Left colon (tissue), 2 donors: ENCODE measurements at regions of chr3 and their contacts with region 1.

Region 1: DNA sequence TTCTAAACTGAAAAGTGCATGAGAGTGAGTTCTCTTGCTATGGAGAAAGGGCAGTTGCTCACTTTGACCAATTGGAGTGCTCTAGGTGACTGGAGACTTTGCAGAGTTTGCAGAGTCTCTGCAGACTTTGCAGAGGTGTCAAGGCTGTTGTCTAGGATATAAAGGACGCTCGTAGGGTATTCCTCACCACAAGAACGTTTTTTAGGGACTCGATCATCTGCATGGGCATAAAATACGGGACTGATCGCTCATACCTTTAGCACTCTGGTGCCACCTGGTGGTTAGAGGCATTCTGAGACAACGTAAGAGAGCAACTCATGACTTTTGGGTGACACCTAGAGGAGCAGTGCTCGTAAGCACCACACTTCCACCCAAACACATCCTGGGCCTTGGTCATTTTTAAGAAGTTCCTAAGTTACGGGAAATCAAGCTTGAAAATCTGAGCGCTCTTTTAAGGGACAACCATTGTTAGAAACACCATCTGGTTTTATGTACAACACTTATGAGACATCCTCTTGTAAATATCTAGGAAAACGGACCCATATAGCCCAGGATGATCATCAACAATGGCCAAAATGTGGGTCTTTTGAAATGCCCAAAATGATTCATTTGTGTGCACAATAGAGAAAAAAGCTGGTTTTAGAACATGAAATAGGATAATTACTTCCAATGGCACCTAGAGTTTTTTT is 51.6 kb upstream of the XCR1 start:
- DNase-seq: peak; percentile 82 to 97
- ATAC-seq: peak; percentile 98

Region 2: GRCh38 chr3:45760878-45761711 is 317.8 kb before region 1 on chr3:
- intact Hi-C with region 1: loop called in 1 of 2 experiments (anchors 10 kb)
- DNase-seq: peak in 1 of 2 donors; percentile 43
- ATAC-seq: peak; percentile 95

Region 3: DNA sequence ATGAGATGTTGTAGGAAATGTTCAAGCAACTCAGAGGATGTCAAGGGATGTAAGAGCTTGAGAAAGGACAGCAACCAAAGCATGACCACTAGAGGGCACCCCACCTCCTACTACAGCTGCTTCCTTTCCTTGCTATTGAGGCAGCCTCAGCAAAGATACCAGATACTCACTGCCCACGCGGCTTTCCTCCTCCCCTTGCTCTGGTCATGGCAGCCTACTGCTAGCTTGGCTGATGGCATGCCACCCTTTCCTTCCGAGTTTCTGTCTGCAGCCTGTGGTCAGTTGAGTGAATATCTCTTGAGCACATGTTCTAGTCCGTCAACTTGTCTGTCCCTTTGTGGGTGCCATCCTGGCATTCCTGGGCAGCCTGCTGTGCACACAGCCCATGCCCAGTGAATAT is 140.0 kb before region 1 on chr3:
- intact Hi-C with region 1: loop called (anchors 2 to 5 kb)
- DNase-seq: peak; percentile 71 to 92
- ATAC-seq: peak; percentile 94